ENCODE measurements at regions of chr1 and their contacts with region 1.

Region 1: GRCh38 chr1:39220891-39221870 is 16.7 kb downstream of the MACF1 start:
- DNase-seq: no peak
- ATAC-seq: no peak
- H3K4me3 ChIP-seq: no peak overlapping the region
- H3K4me3 Mint-ChIP-seq: peak overlapping the region; percentile 17 to 69 (median 46)
- H3K27ac ChIP-seq: no peak overlapping the region
- H3K27ac Mint-ChIP-seq: peak overlapping the region; percentile 1 to 93 (median 51)
- H3K4me1 ChIP-seq: peaks cover 37 to 42% of the 10 kb centered on the region in 2 donors
- H3K4me1 Mint-ChIP-seq: peaks cover 51 to 84% (median 73%) of the 10 kb centered on the region in 7 donors
- H3K27me3 ChIP-seq: no peaks in the 10 kb centered on the region
- H3K27me3 Mint-ChIP-seq: no peaks in the 10 kb centered on the region

Region 2: GRCh38 chr1:39204441-39205081 is 16.6 kb before region 1 on chr1 and contains the start of gene MACF1:
- CTCF ChIA-PET with region 1: interaction called, 19 read pairs
- POLR2A ChIA-PET with region 1: interaction called, 53 read pairs
- intact Hi-C with region 1: no loop called
- DNase-seq: peak in 2 of 9 donors; percentile 49 to 68
- ATAC-seq: peak; percentile 39
- H3K4me3 ChIP-seq: peak within 1 kb of the TSS; percentile 61
- H3K4me3 Mint-ChIP-seq: peak within 1 kb of the TSS; percentile 83 to 99 (median 88)
- H3K27ac ChIP-seq: peak within 1 kb of the TSS; percentile 66
- H3K27ac Mint-ChIP-seq: peak within 1 kb of the TSS; percentile 82 to 98 (median 92)
- H3K4me1 ChIP-seq: peaks cover 19 to 23% of the 10 kb centered on the region in 2 donors
- H3K4me1 Mint-ChIP-seq: peaks cover 38 to 83% (median 74%) of the 10 kb centered on the region in 7 donors
- H3K27me3 ChIP-seq: no peaks in the 10 kb centered on the region
- H3K27me3 Mint-ChIP-seq: no peaks in the 10 kb centered on the region
- total RNA-seq, gene MACF1: 282 to 409 (median 335) TPM

Region 3: DNA sequence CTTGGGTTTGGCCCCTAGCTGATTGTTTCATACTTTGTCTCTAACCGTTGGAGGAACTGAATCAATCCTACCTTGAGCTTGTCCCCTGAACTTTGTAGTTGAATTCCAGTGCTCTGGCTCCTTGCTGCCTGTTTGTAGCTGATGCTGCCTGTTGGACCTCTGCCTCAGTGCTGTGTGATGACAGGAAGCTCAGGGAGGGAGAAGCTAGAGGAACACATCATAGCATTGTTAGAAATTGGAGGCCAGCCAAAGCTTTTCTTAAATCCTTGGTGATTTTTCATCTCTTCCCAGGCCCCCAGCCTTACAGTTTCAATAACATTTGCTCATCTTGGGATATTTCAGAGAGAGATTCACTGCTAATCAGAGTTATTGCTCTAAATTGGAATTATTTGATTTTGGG is 17.3 kb after region 1 on chr1:
- CTCF ChIA-PET with region 1: interaction called, 3 read pairs
- POLR2A ChIA-PET with region 1: interaction called, 4 read pairs
- intact Hi-C with region 1: loop called in 1 of 2 experiments (anchors 2 kb)
- DNase-seq: no peak
- ATAC-seq: no peak
- H3K4me3 ChIP-seq: no peak overlapping the region
- H3K4me3 Mint-ChIP-seq: peak overlapping the region in 5 of 10 donors; percentile 5 to 40 (median 26)
- H3K27ac ChIP-seq: no peak overlapping the region
- H3K27ac Mint-ChIP-seq: peak overlapping the region; percentile 13 to 88 (median 72)
- H3K4me1 ChIP-seq: peaks cover 2 to 14% of the 10 kb centered on the region in 2 donors
- H3K4me1 Mint-ChIP-seq: peaks cover 33 to 67% (median 57%) of the 10 kb centered on the region in 7 donors
- H3K27me3 ChIP-seq: no peaks in the 10 kb centered on the region
- H3K27me3 Mint-ChIP-seq: no peaks in the 10 kb centered on the region

Region 4: GRCh38 chr1:39646232-39647081 is 425.3 kb after region 1 on chr1:
- CTCF ChIA-PET with region 1: no interaction called
- POLR2A ChIA-PET with region 1: no interaction called
- intact Hi-C with region 1: no loop called
- DNase-seq: no peak
- ATAC-seq: no peak
- H3K4me3 ChIP-seq: no peak overlapping the region
- H3K4me3 Mint-ChIP-seq: no peak overlapping the region
- H3K27ac ChIP-seq: no peak overlapping the region
- H3K27ac Mint-ChIP-seq: no peak overlapping the region
- H3K4me1 ChIP-seq: no peaks in the 10 kb centered on the region
- H3K4me1 Mint-ChIP-seq: no peaks in the 10 kb centered on the region
- H3K27me3 ChIP-seq: no peaks in the 10 kb centered on the region
- H3K27me3 Mint-ChIP-seq: peaks cover 0 to 21% (median 0%) of the 10 kb centered on the region in 5 donors

Measured in naive thymus-derived CD4-positive, alpha-beta T cell (primary cell).